ENCODE measurements at regions of chr6 and their contacts with region 1.

Region 1: DNA sequence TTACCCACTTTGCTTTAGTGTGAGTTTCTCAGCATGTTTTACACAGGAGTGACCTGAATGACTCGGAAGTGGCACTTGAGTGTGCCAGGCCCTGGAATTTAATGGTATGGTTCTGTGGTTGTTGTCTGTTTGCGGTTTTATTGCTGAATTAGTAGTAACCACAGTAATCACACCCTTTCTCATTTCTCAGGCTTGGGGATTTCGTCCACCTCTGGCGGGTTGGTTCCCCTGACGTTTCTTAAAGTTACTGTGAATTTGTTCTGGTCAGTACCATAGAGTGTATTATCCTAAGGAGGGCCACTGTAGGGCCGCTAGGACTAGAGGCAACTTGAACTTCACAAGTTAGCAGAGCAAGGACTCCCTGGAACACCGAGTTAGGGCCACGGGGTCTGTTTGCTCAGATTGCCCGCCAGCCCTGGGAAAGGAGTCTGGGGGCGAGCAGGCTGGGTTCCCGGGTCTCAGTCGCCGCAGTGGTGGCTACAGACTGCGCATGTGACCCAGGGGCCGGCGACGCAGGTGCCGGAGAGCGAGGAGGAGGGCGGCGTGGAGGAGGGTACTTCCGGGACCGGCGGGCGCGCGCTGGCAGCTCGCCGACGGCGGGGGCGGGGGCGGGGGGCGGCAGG is 546 bp upstream of the KLHL32 start:
- DNase-seq: no peak
- H3K4me3 Mint-ChIP-seq: peak overlapping the region; percentile 89
- H3K27ac Mint-ChIP-seq: peak overlapping the region; percentile 92
- H3K4me1 Mint-ChIP-seq: peaks cover 44% of the 10 kb centered on the region
- H3K27me3 Mint-ChIP-seq: peaks cover 7% of the 10 kb centered on the region

Region 2: DNA sequence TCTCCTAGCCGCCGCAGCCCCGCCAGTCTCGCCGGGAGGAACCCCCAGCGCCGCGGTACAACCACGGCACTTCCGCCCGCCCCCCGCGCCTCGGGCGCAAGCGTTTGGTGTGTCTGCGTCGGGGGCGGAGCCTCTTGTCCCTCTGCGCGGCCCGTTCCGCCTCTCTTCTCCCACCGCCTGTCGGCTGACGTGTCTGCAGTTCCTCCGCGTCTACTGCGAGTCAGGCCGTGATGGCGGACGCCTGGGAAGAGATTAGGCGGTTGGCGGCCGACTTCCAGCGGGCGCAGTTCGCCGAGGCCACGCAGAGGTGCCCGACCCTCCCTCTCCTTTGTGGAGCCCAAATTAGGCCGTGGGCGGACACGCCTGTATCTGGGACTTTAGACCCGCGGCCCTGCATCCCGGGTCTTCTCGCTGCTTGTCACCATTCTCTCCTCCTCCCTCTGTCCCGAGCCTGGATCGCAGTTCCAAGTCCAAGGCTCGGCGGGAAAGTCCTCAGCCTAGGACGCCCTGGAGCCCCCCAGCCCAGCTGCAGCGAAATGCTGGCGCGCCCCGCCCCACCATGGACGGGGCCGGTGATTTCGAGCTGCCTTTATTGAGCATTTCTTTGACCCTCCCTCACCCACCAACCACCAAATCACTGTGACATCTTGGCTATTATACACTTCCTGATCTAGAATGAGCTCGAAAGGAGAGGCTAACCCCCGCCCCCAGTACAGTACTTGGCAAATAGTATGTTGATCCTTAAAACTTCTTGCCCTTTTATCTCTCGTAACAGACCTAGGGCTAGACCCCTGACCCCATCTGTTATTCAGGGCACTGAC is 402.1 kb before region 1 on chr6 and contains the start of gene UFL1:
- CTCF ChIA-PET with region 1: no interaction called
- POLR2A ChIA-PET with region 1: no interaction called
- DNase-seq: peak; percentile 94
- H3K4me3 Mint-ChIP-seq: peak within 1 kb of the TSS; percentile 99
- H3K27ac Mint-ChIP-seq: peak within 1 kb of the TSS; percentile 100
- H3K4me1 Mint-ChIP-seq: peaks cover 19% of the 10 kb centered on the region
- H3K27me3 Mint-ChIP-seq: no peaks in the 10 kb centered on the region
- total RNA-seq, gene UFL1: 21.7 to 23.7 TPM

Region 3: GRCh38 chr6:96864216-96865054 is 59.5 kb before region 1 on chr6:
- CTCF ChIA-PET with region 1: no interaction called
- POLR2A ChIA-PET with region 1: no interaction called
- DNase-seq: no peak
- H3K4me3 Mint-ChIP-seq: no peak overlapping the region
- H3K27ac Mint-ChIP-seq: no peak overlapping the region
- H3K4me1 Mint-ChIP-seq: no peaks in the 10 kb centered on the region
- H3K27me3 Mint-ChIP-seq: peaks cover 37% of the 10 kb centered on the region

Region 4: DNA sequence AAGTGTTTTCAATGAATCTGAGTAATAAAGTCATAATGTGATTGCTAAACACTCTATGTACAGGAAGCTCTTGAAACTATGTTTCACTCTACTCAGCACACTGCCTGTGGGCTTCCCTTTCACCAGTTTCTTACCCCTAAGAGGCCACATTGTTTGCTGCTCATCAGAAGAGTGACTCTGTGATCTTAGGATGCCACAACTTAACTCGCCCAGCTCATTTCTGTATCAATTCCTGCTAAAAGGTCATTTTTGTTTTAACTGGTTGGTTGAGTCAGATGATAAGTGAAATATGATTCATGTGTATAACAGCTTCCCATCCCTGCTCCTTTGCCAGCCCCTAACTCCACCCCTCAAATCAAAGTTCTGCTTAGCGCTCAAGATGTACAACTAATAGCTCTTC is 16.5 kb before region 1 on chr6:
- CTCF ChIA-PET with region 1: interaction called, 15 read pairs
- POLR2A ChIA-PET with region 1: interaction called, 4 read pairs
- DNase-seq: no peak
- H3K4me3 Mint-ChIP-seq: no peak overlapping the region
- H3K27ac Mint-ChIP-seq: no peak overlapping the region
- H3K4me1 Mint-ChIP-seq: peaks cover 13% of the 10 kb centered on the region
- H3K27me3 Mint-ChIP-seq: peaks cover 16% of the 10 kb centered on the region

Region 5: DNA sequence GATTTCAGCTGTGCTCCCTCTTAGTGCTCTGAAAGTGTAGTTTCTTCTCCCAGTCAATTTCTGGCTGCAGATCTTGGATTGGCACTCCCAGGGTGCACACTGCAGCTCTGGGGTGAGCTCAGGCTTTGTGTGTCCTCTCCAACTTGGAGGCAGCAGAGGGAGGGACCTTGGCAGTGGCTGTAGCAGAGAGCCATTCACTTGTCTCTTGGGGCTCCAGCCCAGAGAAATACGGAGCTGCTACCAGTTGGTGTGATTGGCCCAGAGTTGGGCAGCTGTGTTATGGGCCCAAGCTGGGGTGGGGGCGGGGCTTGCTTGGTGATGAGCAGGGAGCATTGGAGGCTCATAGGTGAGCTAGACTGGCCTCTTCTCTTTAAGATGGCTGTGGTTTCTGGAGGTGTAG is 66.5 kb after region 1 on chr6:
- CTCF ChIA-PET with region 1: no interaction called
- POLR2A ChIA-PET with region 1: no interaction called
- DNase-seq: no peak
- H3K4me3 Mint-ChIP-seq: no peak overlapping the region
- H3K27ac Mint-ChIP-seq: no peak overlapping the region
- H3K4me1 Mint-ChIP-seq: no peaks in the 10 kb centered on the region
- H3K27me3 Mint-ChIP-seq: no peaks in the 10 kb centered on the region

Measured in activated CD4-positive, alpha-beta T cell treated with anti-CD3 and anti-CD28 coated beads, Interleukin-2, amount 10 ng/mL, durations not matched to agents 7 days and 5 days (primary cell).